Naive thymus-derived CD4-positive, alpha-beta T cell (primary cell): ENCODE measurements at regions of chr2 and their contacts with region 1.

Region 1: DNA sequence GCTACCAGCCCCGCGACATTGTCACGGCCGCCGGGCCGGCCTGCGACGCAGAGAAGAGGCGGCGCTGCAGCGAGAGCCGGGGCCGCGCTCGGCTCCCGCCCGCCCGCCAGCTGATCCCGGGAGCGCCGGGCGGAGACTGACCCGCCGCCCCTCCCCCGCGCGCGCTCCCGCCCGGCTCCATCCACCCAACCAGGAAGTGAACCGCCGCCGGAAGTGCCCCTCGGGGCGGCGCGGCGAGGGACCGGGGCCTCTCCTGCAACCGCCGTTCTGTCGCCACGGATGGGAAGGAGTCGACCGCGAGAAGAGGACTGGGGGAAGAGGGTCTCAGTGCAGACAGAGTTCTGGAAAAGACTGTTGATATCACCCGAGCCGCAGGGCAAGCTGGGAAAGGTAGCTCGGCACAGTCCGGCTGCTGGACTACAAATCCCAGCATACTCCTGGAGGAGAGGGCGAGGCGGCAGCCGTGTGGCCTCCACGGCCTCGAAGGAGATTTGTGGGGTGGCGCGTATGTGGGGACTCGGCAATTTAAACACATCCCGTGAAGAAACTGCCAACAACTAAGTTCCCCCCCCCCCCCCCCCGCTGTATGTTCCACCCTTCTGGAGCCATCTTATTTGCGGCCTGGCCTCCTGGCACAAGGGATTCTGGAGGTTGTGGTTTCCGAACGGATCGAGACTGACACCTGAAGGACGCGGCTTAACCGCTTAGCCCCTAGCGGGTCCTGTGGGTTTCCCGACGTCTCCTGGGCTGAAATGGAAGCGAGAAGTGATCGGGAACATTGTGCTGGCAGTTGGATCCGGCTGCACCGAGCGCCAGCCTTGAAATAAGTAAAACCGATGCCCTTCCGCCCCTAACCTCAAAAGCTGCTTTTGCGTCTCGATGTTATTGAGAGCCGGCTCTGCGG is at the start of gene AAK1:
- DNase-seq: peak; percentile 69 to 89 (median 85)
- ATAC-seq: peak; percentile 71
- H3K4me3 ChIP-seq: peak within 1 kb of the TSS; percentile 80
- H3K4me3 Mint-ChIP-seq: peak within 1 kb of the TSS; percentile 95 to 99 (median 98)
- H3K27ac ChIP-seq: peak within 1 kb of the TSS; percentile 86
- H3K27ac Mint-ChIP-seq: peak within 1 kb of the TSS; percentile 94 to 99 (median 96)
- H3K4me1 ChIP-seq: peaks cover 43 to 50% of the 10 kb centered on the region in 2 donors
- H3K4me1 Mint-ChIP-seq: peaks cover 51 to 69% (median 59%) of the 10 kb centered on the region in 7 donors
- H3K27me3 ChIP-seq: no peaks in the 10 kb centered on the region
- H3K27me3 Mint-ChIP-seq: no peaks in the 10 kb centered on the region
- total RNA-seq, gene AAK1: 114 to 253 (median 218) TPM

Region 2: GRCh38 chr2:68467077-68467960 is 1176.5 kb before region 1 on chr2 and contains the starts of genes APLF and FBXO48:
- CTCF ChIA-PET with region 1: no interaction called
- POLR2A ChIA-PET with region 1: no interaction called
- intact Hi-C with region 1: loop called in 1 of 2 experiments (anchors 10 kb)
- DNase-seq: peak; percentile 90 to 99 (median 99)
- ATAC-seq: peak; percentile 94
- H3K4me3 ChIP-seq: peak within 1 kb of the TSS; percentile 99
- H3K4me3 Mint-ChIP-seq: peak within 1 kb of the TSS; percentile 88 to 99 (median 94)
- H3K27ac ChIP-seq: peak within 1 kb of the TSS; percentile 89
- H3K27ac Mint-ChIP-seq: peak within 1 kb of the TSS; percentile 80 to 97 (median 89)
- H3K4me1 ChIP-seq: peaks cover 7 to 23% of the 10 kb centered on the region in 2 donors
- H3K4me1 Mint-ChIP-seq: peaks cover 10 to 55% (median 39%) of the 10 kb centered on the region in 7 donors
- H3K27me3 ChIP-seq: no peaks in the 10 kb centered on the region
- H3K27me3 Mint-ChIP-seq: no peaks in the 10 kb centered on the region
- total RNA-seq, gene APLF: 2.9 to 8.9 (median 3.8) TPM
- total RNA-seq, gene FBXO48: 1.1 to 5.6 (median 1.7) TPM

Region 3: GRCh38 chr2:69559442-69560146 is 84.3 kb before region 1 on chr2:
- CTCF ChIA-PET with region 1: interaction called, 35 read pairs
- POLR2A ChIA-PET with region 1: interaction called, 31 read pairs
- intact Hi-C with region 1: loop called (anchors 1 to 5 kb)
- DNase-seq: peak in 3 of 9 donors; percentile 22 to 32 (median 28)
- ATAC-seq: peak; percentile 75
- H3K4me3 ChIP-seq: no peak overlapping the region
- H3K4me3 Mint-ChIP-seq: peak overlapping the region in 9 of 10 donors; percentile 16 to 78 (median 48)
- H3K27ac ChIP-seq: no peak overlapping the region
- H3K27ac Mint-ChIP-seq: peak overlapping the region in 8 of 9 donors; percentile 10 to 83 (median 57)
- H3K4me1 ChIP-seq: peaks cover 8 to 62% of the 10 kb centered on the region in 2 donors
- H3K4me1 Mint-ChIP-seq: peaks cover 57 to 97% (median 93%) of the 10 kb centered on the region in 7 donors
- H3K27me3 ChIP-seq: no peaks in the 10 kb centered on the region
- H3K27me3 Mint-ChIP-seq: no peaks in the 10 kb centered on the region

Region 4: DNA sequence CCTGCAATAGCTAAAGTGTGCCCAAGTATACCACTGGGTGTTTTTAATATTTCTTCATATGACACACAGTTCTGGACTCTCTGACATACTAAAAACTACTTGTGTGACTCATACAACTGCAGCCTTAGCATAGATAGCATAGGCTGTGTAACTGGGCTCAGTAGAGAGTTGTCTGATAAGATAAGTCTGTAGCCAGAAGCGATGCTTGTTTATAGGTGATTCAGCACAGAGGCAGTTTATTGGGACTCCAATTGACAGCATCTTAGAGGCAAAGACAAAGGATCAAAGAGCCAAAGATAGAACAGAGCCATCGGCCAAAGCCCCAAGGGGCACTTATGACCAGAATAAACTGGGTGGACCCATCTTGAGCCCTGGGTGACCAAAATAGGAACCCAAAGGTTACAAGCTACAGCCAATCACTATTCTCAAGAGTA is 42.7 kb before region 1 on chr2:
- CTCF ChIA-PET with region 1: interaction called, 5 read pairs
- POLR2A ChIA-PET with region 1: interaction called, 21 read pairs
- intact Hi-C with region 1: loop called (anchors 1 to 2 kb)
- DNase-seq: no peak
- ATAC-seq: peak; percentile 69
- H3K4me3 ChIP-seq: no peak overlapping the region
- H3K4me3 Mint-ChIP-seq: peak overlapping the region in 9 of 10 donors; percentile 16 to 73 (median 48)
- H3K27ac ChIP-seq: peak overlapping the region; percentile 47
- H3K27ac Mint-ChIP-seq: peak overlapping the region; percentile 25 to 93 (median 71)
- H3K4me1 ChIP-seq: peaks cover 42 to 66% of the 10 kb centered on the region in 2 donors
- H3K4me1 Mint-ChIP-seq: peaks cover 74 to 97% (median 91%) of the 10 kb centered on the region in 7 donors
- H3K27me3 ChIP-seq: no peaks in the 10 kb centered on the region
- H3K27me3 Mint-ChIP-seq: no peaks in the 10 kb centered on the region

Region 5: GRCh38 chr2:69683101-69683971 is 39.5 kb after region 1 on chr2:
- CTCF ChIA-PET with region 1: interaction called, 18 read pairs
- POLR2A ChIA-PET with region 1: interaction called, 334 read pairs
- intact Hi-C with region 1: no loop called
- DNase-seq: no peak
- ATAC-seq: no peak
- H3K4me3 ChIP-seq: no peak overlapping the region
- H3K4me3 Mint-ChIP-seq: peak overlapping the region; percentile 60 to 85 (median 76)
- H3K27ac ChIP-seq: peak overlapping the region; percentile 25
- H3K27ac Mint-ChIP-seq: peak overlapping the region; percentile 76 to 93 (median 89)
- H3K4me1 ChIP-seq: peaks cover 18 to 42% of the 10 kb centered on the region in 2 donors
- H3K4me1 Mint-ChIP-seq: peaks cover 32 to 89% (median 75%) of the 10 kb centered on the region in 7 donors
- H3K27me3 ChIP-seq: no peaks in the 10 kb centered on the region
- H3K27me3 Mint-ChIP-seq: no peaks in the 10 kb centered on the region

Region 6: GRCh38 chr2:69724540-69725159 is 80.8 kb after region 1 on chr2:
- CTCF ChIA-PET with region 1: interaction called, 11 read pairs
- POLR2A ChIA-PET with region 1: interaction called, 5 read pairs
- intact Hi-C with region 1: no loop called
- DNase-seq: peak; percentile 59 to 85 (median 74)
- ATAC-seq: peak; percentile 92
- H3K4me3 ChIP-seq: no peak overlapping the region
- H3K4me3 Mint-ChIP-seq: peak overlapping the region in 9 of 10 donors; percentile 35 to 81 (median 57)
- H3K27ac ChIP-seq: no peak overlapping the region
- H3K27ac Mint-ChIP-seq: no peak overlapping the region
- H3K4me1 ChIP-seq: peaks cover 0 to 4% of the 10 kb centered on the region in 2 donors
- H3K4me1 Mint-ChIP-seq: peaks cover 0 to 8% (median 5%) of the 10 kb centered on the region in 7 donors
- H3K27me3 ChIP-seq: no peaks in the 10 kb centered on the region
- H3K27me3 Mint-ChIP-seq: peaks cover 0 to 7% (median 0%) of the 10 kb centered on the region in 5 donors

Region 7: GRCh38 chr2:70132244-70133126 is 488.6 kb after region 1 on chr2:
- CTCF ChIA-PET with region 1: no interaction called
- POLR2A ChIA-PET with region 1: no interaction called
- intact Hi-C with region 1: loop called in 1 of 2 experiments (anchors 10 kb)
- DNase-seq: peak in 7 of 9 donors; percentile 63 to 77 (median 68)
- ATAC-seq: peak; percentile 66
- H3K4me3 ChIP-seq: peak overlapping the region; percentile 53
- H3K4me3 Mint-ChIP-seq: peak overlapping the region; percentile 81 to 94 (median 90)
- H3K27ac ChIP-seq: peak overlapping the region; percentile 85
- H3K27ac Mint-ChIP-seq: peak overlapping the region; percentile 95 to 99 (median 97)
- H3K4me1 ChIP-seq: peaks cover 66 to 74% of the 10 kb centered on the region in 2 donors
- H3K4me1 Mint-ChIP-seq: peaks cover 58 to 88% (median 79%) of the 10 kb centered on the region in 7 donors
- H3K27me3 ChIP-seq: no peaks in the 10 kb centered on the region
- H3K27me3 Mint-ChIP-seq: no peaks in the 10 kb centered on the region